ENCODE measurements at regions of chr11 and their contacts with region 1.

Region 1: DNA sequence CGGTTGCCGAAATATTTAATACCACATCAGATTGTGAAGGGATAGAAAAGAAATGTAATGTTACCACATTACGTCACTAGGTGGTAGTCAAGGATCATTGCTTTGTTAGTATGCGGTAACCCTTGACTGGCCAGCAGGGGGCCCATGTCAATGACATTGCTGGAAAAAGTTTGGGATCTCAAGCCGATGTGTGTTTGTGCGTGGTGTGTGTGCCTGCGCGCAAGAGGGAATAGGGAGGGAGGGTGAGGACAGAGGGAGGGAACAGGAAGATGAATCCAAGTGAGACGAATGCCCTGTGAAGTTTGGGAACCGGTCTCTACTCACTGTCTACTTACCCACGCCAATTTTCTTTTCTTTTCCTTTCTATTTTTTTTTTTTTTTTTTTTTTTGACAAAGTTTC is 10.7 kb upstream of the MRGPRX2 start:
- DNase-seq: peak in 9 of 10 donors; percentile 25 to 75 (median 58)
- H3K4me3 ChIP-seq: peak overlapping the region in 14 of 59 donors; percentile 4 to 35 (median 20)
- H3K27ac ChIP-seq: no peak overlapping the region
- H3K27me3 ChIP-seq: peaks cover 0 to 31% (median 3%) of the 10 kb centered on the region in 45 donors
- CTCF ChIP-seq: peak; percentile 60 to 98 (median 90)

Region 2: DNA sequence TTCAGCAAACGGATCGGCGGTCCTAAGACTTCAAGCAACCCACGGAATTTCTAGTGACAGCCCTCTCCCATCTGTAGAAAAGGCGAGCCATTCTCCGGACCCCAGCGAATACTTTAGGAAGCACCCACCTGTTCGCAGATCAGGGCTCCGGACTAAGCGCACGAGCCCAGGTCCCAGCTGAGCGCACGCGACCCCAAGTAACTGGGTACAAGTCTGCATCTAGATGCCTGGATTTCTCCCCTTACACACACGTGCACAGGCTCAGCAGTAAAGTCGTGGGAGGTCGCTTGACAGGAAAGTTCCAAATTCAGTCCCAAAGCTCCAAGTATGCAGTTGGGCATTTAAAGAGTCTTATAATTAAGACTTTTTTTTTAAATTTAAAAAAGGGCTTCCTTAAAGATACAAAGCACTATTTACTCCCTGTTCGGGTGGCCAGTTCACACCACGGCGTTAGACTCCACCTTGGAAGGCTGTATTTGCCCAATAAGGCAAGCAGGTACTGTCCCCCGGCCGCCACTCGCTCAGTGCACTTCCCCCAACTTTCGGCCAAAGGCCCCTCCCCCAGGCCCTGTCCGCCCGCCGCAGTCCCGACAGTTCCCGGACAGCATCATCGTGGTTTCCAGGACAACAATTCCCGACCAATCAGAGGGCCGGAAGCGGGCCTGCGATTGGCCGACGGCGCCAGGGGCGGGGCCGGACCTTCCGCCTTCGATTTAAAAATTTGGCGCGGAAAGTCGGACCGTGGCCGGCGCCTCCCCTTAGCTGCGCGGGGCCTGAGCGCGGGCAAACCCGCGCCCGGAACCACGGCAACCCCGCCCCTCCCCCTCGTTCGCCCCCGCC is 169.4 kb after region 1 on chr11 and contains the start of gene E2F8:
- intact Hi-C with region 1: loop called (anchors 5 to 10 kb)
- DNase-seq: peak; percentile 76 to 95 (median 90)
- H3K4me3 ChIP-seq: peak within 1 kb of the TSS; percentile 45 to 83 (median 65)
- H3K27ac ChIP-seq: no peak within 1 kb of the TSS
- H3K27me3 ChIP-seq: peaks cover 2 to 64% (median 35%) of the 10 kb centered on the region in 45 donors
- CTCF ChIP-seq: peak in 3 of 56 donors; percentile 9 to 13 (median 10)
- total RNA-seq, gene E2F8: 0.14 to 0.71 (median 0.18) TPM in 5 of 120 experiments, not detected in the others

Region 3: DNA sequence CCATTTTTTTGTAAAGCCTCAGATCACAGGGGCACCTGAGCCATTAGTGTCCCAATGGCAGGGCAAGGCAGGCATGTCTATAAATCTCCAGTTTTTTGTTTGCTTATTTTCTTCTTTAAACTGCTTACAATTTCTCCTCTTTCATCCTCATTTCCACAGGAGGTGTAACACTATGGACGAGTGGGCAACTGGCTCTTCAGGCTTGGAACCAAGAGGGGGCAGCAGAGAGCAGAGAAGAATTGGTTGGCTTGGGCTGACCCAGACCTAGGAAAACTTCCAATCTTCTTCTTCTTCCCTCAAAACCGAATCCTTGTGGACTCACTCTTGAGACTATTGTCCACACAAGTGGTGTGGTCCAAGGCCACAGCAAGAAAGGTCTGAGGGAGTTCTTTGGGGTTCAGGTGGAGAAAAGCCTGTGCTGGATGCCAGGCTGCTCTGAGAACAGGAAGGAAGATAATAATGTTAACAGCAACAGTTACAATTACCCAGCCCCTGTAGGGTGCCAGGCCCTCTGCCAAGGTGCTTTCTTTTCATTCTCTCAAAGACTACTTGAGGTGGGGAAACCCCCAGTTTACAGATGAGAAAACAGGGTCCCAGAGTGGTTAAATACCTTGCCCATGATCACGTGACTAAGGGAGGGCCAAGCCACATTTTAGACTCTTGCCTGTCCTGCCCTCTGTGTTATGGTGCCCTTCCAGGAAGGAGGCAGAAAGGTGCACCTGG is 240.2 kb after region 1 on chr11:
- intact Hi-C with region 1: loop called in 1 of 2 experiments (anchors 10 kb)
- DNase-seq: peak in 9 of 10 donors; percentile 44 to 80 (median 72)
- H3K4me3 ChIP-seq: no peak overlapping the region
- H3K27ac ChIP-seq: no peak overlapping the region
- H3K27me3 ChIP-seq: peaks cover 0 to 14% (median 0%) of the 10 kb centered on the region in 45 donors
- CTCF ChIP-seq: peak; percentile 60 to 94 (median 87)

Measured in dorsolateral prefrontal cortex (tissue), 120 donors.